ENCODE measurements at regions of chr18 and their contacts with region 1.

Region 1: GRCh38 chr18:32289483-32290075 is 99.7 kb downstream of the MEP1B start:
- DNase-seq: peak; percentile 65 to 81 (median 75)
- H3K4me3 ChIP-seq: no peak overlapping the region
- H3K27ac ChIP-seq: no peak overlapping the region
- H3K4me1 ChIP-seq: no peaks in the 10 kb centered on the region
- H3K27me3 ChIP-seq: peaks cover 3 to 28% (median 8%) of the 10 kb centered on the region in 5 experiments

Region 2: DNA sequence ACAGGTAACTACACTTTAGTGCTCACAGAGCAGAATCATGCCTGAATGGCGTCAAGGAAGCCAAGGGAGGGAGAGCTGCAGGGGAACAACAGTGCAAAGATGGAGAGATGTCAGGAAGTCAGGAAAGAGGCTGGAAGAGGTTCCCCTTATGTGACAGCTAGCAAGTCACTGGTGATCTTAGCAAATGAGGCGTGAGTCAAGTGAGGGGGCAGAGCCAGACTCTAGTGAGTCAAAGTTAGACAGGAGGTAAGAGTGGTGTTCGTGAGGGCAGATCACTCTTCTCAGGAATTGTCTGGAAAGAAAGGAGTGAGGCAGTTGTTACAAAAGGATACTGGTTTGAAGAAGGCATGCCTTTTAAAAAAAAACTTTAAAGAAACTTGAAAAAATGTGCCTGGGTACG is 12.7 kb before region 1 on chr18:
- CTCF ChIA-PET with region 1: interaction called, 16 read pairs
- POLR2A ChIA-PET with region 1: no interaction called
- DNase-seq: no peak
- H3K4me3 ChIP-seq: no peak overlapping the region
- H3K27ac ChIP-seq: no peak overlapping the region
- H3K4me1 ChIP-seq: no peaks in the 10 kb centered on the region
- H3K27me3 ChIP-seq: peaks cover 0 to 4% (median 0%) of the 10 kb centered on the region in 5 experiments

Region 3: GRCh38 chr18:32301976-32302743 is 12.6 kb after region 1 on chr18:
- CTCF ChIA-PET with region 1: interaction called, 11 read pairs
- POLR2A ChIA-PET with region 1: no interaction called
- DNase-seq: peak; percentile 24 to 75 (median 66)
- H3K4me3 ChIP-seq: no peak overlapping the region
- H3K27ac ChIP-seq: no peak overlapping the region
- H3K4me1 ChIP-seq: peaks cover 0 to 2% (median 0%) of the 10 kb centered on the region in 4 experiments
- H3K27me3 ChIP-seq: peaks cover 7 to 42% (median 20%) of the 10 kb centered on the region in 5 experiments

Region 4: DNA sequence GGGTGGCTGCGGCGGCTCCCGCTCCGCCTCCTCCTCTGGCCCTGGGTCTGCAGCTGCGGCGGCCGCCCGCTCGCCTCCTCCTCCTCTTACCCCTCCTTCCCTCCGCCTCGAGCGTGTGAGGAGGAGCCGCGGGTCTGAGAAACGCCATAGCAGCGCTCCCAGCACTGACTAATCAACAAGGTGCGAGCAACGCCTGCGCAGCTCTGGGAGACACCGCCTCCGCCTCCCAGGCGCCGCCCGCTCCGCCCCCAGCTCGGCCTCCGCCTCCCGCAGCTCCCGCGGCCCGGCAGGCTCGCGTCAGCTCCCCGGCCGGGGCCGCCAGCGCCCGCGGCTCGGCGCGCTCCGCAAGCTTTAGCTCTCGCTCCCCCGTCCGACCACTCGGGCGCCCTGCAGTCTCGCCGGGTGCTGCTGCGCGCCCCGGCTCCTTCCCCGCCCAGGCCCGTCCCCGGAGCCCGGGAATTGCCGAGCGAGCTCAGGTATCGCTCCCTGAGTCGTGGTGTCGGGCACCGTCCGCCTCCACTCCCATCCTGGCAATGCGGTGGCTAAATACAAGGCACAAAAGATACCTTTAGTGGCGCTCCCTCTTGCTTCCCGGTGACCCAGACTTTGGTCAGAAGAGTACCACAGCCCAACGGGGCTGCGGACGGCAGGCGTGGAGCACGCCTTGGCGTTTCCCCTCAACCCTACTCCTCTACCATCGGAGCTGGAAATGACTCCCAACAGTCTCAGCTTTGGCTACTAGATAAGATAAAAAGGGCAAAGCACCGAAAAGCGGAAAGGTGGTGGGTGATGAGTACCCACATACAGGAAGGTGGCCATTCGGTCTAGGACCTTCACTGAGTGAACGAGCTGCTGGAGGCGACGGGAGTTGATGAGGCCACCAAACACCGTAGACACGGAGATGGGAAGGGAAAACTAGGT is 181.4 kb after region 1 on chr18 and contains the start of gene GAREM1:
- CTCF ChIA-PET with region 1: interaction called, 11 read pairs
- POLR2A ChIA-PET with region 1: no interaction called
- DNase-seq: peak; percentile 93 to 96 (median 96)
- H3K4me3 ChIP-seq: peak within 1 kb of the TSS; percentile 38 to 77 (median 65)
- H3K27ac ChIP-seq: no peak within 1 kb of the TSS
- H3K4me1 ChIP-seq: peaks cover 10 to 29% (median 19%) of the 10 kb centered on the region in 4 experiments
- H3K27me3 ChIP-seq: peaks cover 22 to 73% (median 45%) of the 10 kb centered on the region in 5 experiments

Measured in common myeloid progenitor, CD34-positive (primary cell).